Motor neuron (in vitro differentiated cells): ENCODE measurements at regions of chr1 and their contacts with region 1.

Region 1: DNA sequence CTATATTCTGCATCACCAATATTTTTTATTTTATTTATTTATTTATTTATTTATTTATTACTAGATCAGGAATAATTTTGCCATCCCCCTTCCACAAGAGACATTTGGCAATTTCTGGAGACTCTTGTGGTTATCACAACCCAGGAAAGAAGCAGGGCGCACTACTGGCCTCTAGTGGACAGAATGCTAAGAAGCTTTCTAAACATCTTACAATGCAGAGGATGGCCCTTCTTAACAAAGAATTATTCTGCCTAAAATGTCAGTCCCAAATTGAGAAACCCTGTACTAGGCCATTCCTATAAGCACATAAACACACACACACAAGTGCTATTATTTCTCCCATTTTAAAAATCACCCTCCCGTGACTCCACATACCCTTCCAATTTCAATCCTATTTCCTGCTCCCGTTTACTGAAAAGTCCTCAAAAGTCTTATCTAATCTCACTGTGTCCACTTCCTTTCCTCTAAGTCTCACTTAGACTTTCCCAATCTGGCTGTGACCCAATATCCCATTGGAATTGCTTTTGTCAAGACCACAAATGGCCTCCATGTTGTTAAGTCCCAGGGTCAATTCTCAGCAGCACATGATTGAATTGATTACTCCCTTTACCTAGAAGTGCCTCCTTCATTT is 43.7 kb upstream of the RNF11 start:
- ATAC-seq: peak in 5 of 8 experiments; percentile 32 to 84 (median 82)
- H3K4me3 ChIP-seq: no peak overlapping the region
- H3K27ac ChIP-seq: no peak overlapping the region
- H3K4me1 ChIP-seq: no peaks in the 10 kb centered on the region

Region 2: DNA sequence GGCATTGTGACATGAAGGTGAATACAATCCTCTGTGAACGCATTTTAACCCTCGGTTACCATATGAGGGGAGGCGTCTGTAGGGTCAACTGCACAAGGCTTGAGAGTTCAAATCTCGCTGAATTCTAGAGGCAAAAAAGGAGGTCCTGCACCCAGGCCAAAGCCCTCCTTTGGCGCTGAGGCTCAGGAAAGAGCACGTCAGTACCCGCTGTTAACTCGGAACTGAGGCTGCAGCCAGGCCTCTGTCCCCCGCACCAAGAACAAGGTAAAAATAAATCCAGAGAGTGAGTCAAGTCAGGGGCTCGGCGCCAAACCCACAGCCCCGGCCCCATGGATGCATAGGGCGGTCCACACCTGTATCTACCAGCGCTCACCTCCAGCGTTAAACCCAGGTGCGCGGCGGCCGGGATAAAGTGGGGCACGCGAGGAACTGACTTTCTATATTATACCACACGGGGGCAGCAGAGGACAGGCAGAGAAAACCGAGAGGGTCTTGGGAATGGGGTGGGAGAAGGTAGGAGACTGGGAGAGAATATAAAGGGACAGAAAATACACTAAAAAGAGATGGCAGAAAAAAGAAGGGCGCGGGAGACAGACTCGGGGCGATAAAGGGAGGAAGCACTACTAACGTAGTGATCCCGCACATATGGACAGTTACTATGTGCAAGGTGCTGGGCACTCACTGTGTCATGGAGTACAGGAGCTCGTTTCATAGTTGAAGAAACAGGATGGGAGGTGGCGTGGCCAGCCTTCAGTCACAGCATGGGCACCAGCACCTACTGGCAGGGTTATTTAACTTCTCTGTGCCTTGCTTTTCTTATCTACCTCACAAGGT is 823.9 kb before region 1 on chr1:
- in situ Hi-C with region 1: loop called in 2 of 9 experiments (anchors 25 kb)
- ATAC-seq: peak; percentile 64 to 94 (median 74)
- H3K4me3 ChIP-seq: no peak overlapping the region
- H3K27ac ChIP-seq: no peak overlapping the region
- H3K4me1 ChIP-seq: peaks cover 0 to 3% of the 10 kb centered on the region in 2 donors

Region 3: GRCh38 chr1:50774759-50775351 is 417.5 kb before region 1 on chr1:
- in situ Hi-C with region 1: loop called in 3 of 9 experiments (anchors 25 kb)
- ATAC-seq: peak in 7 of 8 experiments; percentile 31 to 75 (median 56)
- H3K4me3 ChIP-seq: no peak overlapping the region
- H3K27ac ChIP-seq: no peak overlapping the region
- H3K4me1 ChIP-seq: peaks cover 0 to 2% of the 10 kb centered on the region in 2 donors

Region 4: DNA sequence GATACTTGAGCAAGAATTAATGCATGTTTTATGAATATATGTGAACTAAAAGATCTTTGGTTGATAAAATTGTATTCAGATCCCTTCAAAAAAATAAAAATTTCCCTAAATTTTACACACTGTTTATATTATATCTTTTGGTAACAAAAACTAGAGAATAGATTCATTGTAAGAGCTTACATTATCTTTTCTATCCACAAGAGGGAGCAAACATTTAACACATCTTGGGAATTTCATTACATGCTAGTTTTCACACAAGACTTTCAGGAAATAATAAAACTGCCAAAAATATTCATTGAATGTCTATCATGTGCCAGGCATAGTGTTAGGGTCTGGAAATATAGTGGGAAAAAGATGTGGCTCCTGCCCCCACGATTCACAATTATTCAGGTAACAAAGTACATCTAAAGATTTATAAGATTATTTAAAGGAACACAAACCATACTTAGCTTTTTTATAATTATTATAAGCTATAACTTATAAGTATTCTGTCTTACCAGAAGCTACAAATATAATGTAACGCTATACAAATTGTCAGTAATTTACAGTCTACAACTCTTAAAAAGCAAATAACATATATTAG is 262.9 kb before region 1 on chr1:
- in situ Hi-C with region 1: loop called in 1 of 9 experiments (anchors 25 kb)
- ATAC-seq: peak in 1 of 8 experiments; percentile 22
- H3K4me3 ChIP-seq: no peak overlapping the region
- H3K27ac ChIP-seq: no peak overlapping the region
- H3K4me1 ChIP-seq: no peaks in the 10 kb centered on the region

Region 5: DNA sequence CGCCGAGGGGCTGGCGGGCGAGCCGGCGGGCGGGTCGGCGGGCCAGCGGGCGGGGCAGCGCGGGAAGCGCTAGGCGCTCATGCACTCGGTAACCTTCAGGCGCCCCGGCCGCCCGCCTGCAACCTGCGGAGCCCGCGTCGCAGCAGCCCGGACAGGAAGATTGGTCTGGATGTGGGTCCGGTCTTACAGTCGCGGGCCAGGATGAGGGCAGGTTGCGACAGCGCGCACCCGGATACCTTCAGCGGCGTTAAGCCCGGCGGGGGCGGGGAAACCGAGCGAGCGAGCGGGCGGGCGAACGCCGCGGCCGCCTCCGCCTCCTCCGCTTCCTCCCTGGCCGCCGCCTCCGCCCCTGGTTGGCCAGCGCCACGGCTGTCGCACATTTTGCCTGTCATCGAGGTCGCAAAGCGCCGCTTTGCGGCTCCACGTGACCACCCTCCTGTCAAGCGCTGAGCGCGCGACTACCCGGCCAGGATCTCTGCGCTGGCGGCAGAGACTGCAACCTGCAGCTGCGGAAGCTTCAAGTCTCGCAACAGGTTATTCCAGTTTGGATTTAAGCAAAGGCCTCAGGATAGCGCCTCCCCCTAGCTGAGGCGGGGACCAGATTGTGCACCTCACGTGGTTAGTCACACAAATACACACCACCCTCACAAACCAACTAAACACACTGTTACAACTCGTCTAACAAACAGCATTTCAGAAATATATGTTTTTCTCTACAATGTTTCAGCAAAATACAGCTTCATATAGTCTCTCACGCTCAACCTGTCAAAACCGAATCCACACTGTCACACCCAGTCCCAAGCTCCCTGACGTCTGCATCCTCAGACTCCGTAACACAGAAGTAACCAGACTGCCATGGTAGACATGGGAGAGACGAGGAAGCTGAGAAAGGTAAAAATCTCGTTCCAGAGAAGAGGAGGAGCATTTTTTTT is 232.1 kb before region 1 on chr1 and contains the start of gene FAF1:
- in situ Hi-C with region 1: loop called in 1 of 9 experiments (anchors 25 kb)
- ATAC-seq: peak; percentile 83 to 95 (median 91)
- H3K4me3 ChIP-seq: peak within 1 kb of the TSS; percentile 60 to 85 (median 77)
- H3K27ac ChIP-seq: peak within 1 kb of the TSS; percentile 65 to 84
- H3K4me1 ChIP-seq: peaks cover 6 to 7% of the 10 kb centered on the region in 2 donors
- total RNA-seq, gene FAF1: 26.3 to 79.4 (median 52.0) TPM

Region 6: GRCh38 chr1:51058858-51059257 is 133.5 kb before region 1 on chr1:
- in situ Hi-C with region 1: no loop called
- ATAC-seq: peak in 3 of 8 experiments; percentile 93 to 96 (median 96)
- H3K4me3 ChIP-seq: no peak overlapping the region
- H3K27ac ChIP-seq: no peak overlapping the region
- H3K4me1 ChIP-seq: no peaks in the 10 kb centered on the region

Region 7: DNA sequence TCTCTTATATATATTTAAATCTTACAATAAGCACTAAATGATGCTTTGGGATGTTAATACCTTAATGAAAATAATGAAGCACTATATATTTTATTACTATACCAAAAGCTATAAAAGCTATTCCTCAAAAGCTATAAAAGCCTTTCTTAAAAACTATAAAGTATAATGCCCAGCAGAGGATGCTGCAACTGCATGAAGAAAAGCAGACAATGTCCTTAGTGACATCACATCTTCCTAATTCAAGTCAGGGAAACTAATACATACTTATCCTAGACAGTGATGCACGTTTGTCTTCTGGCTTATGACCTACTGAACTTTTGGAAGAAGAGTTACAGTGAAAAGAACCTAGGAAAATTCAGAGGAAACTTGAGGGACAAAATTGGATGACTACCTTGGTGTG is 103.8 kb before region 1 on chr1:
- in situ Hi-C with region 1: loop called in 1 of 9 experiments (anchors 25 kb)
- ATAC-seq: no peak
- H3K4me3 ChIP-seq: no peak overlapping the region
- H3K27ac ChIP-seq: no peak overlapping the region
- H3K4me1 ChIP-seq: no peaks in the 10 kb centered on the region